Heart right ventricle (tissue), 16 donors: ENCODE measurements at regions of chr2 and their contacts with region 1.

Region 1: GRCh38 chr2:68362069-68362468 is 3.0 kb upstream of the PLEK start:
- DNase-seq: peak; percentile 73 to 77
- ATAC-seq: peak; percentile 56 to 81 (median 73)
- H3K4me3 ChIP-seq: peak overlapping the region in 2 of 10 donors; percentile 12 to 26
- H3K27ac ChIP-seq: peak overlapping the region in 2 of 10 donors; percentile 0 to 87
- H3K4me1 ChIP-seq: peaks cover 0 to 27% (median 4%) of the 10 kb centered on the region in 9 donors
- H3K27me3 ChIP-seq: no peaks in the 10 kb centered on the region
- CTCF ChIP-seq: peak; percentile 67 to 83 (median 76)

Region 2: GRCh38 chr2:68121873-68122679 is 240.0 kb before region 1 on chr2:
- intact Hi-C with region 1: loop called in 7 of 10 experiments (anchors 1 to 10 kb)
- DNase-seq: peak; percentile 86 to 88
- ATAC-seq: peak in 7 of 8 donors; percentile 64 to 87 (median 84)
- H3K4me3 ChIP-seq: peak overlapping the region in 2 of 10 donors; percentile 5 to 14
- H3K27ac ChIP-seq: no peak overlapping the region
- H3K4me1 ChIP-seq: peaks cover 0 to 13% (median 8%) of the 10 kb centered on the region in 9 donors
- H3K27me3 ChIP-seq: no peaks in the 10 kb centered on the region
- CTCF ChIP-seq: peak in 8 of 9 donors; percentile 92 to 98 (median 98)

Region 3: GRCh38 chr2:68196120-68196716 is 165.9 kb before region 1 on chr2:
- intact Hi-C with region 1: loop called in 1 of 10 experiments (anchors 10 kb)
- DNase-seq: peak in 1 of 2 donors; percentile 35
- ATAC-seq: peak in 2 of 8 donors; percentile 23 to 52
- H3K4me3 ChIP-seq: no peak overlapping the region
- H3K27ac ChIP-seq: no peak overlapping the region
- H3K4me1 ChIP-seq: peaks cover 0 to 79% (median 25%) of the 10 kb centered on the region in 9 donors
- H3K27me3 ChIP-seq: no peaks in the 10 kb centered on the region
- CTCF ChIP-seq: peak in 8 of 9 donors; percentile 50 to 85 (median 73)

Region 4: GRCh38 chr2:68387408-68388350 is 25.6 kb after region 1 on chr2:
- intact Hi-C with region 1: loop called in 1 of 10 experiments (anchors 1 kb)
- DNase-seq: no peak
- ATAC-seq: peak in 2 of 8 donors; percentile 12
- H3K4me3 ChIP-seq: no peak overlapping the region
- H3K27ac ChIP-seq: peak overlapping the region in 2 of 10 donors; percentile 53 to 74
- H3K4me1 ChIP-seq: peaks cover 0 to 75% (median 27%) of the 10 kb centered on the region in 9 donors
- H3K27me3 ChIP-seq: no peaks in the 10 kb centered on the region
- CTCF ChIP-seq: no peak

Region 5: GRCh38 chr2:68434981-68435380 is 72.9 kb after region 1 on chr2:
- intact Hi-C with region 1: loop called in 7 of 10 experiments (anchors 2 to 10 kb)
- DNase-seq: no peak
- ATAC-seq: peak in 1 of 8 donors; percentile 41
- H3K4me3 ChIP-seq: no peak overlapping the region
- H3K27ac ChIP-seq: peak overlapping the region in 1 of 10 donors; percentile 70
- H3K4me1 ChIP-seq: peaks cover 0 to 33% (median 20%) of the 10 kb centered on the region in 9 donors
- H3K27me3 ChIP-seq: no peaks in the 10 kb centered on the region
- CTCF ChIP-seq: no peak